Kidney (tissue), 22 donors: ENCODE measurements at regions of chr11 and their contacts with region 1.

Region 1: GRCh38 chr11:73393479-73394380 is 17.5 kb downstream of the RELT start:
- DNase-seq: peak; percentile 78 to 88 (median 83)
- H3K4me3 ChIP-seq: no peak overlapping the region
- H3K27ac ChIP-seq: no peak overlapping the region
- H3K4me1 ChIP-seq: peaks cover 0 to 2% (median 0%) of the 10 kb centered on the region in 3 donors
- H3K27me3 ChIP-seq: no peaks in the 10 kb centered on the region
- CTCF ChIP-seq: peak; percentile 82

Region 2: DNA sequence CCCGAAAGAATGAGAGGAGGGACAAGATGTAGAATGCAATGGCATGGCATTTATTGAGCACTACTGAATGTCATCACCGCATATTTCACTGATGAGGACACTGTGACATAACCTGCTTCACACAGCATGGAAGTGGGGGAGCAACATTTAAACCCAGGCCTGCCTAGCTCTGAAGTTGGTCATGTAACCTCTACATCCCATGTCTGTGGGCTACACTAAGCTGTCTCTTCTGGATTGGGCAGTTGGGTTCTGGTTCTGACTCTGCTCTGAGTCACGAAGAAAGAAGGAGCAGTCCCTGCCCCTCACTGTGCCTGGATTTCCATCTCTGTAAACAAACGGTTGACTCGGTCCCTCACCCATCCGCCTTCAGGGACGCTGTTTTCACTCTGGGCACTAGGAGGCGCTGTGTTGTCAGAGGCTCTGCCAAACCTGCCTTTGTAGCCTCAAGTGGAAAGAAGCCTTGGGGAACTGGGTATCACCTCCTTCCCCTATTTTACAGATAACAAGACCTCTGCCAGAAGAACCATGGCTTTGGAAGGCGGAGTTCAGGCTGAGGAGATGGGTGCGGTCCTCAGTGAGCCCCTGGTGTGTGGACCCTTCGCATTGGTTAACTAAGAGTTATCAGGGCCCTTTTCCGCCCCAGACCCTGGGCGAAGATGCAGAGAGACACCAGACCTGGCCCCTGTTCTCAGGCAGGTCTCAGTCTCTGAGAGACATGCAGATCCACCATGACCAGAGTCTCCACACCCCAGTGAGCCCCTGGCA is 98.3 kb before region 1 on chr11:
- intact Hi-C with region 1: loop called (anchors 10 kb)
- DNase-seq: peak; percentile 73 to 85 (median 76)
- H3K4me3 ChIP-seq: no peak overlapping the region
- H3K27ac ChIP-seq: no peak overlapping the region
- H3K4me1 ChIP-seq: no peaks in the 10 kb centered on the region
- H3K27me3 ChIP-seq: no peaks in the 10 kb centered on the region
- CTCF ChIP-seq: peak; percentile 84

Region 3: GRCh38 chr11:73307323-73308002 is 86.3 kb before region 1 on chr11:
- intact Hi-C with region 1: no loop called
- DNase-seq: peak; percentile 99 to 100 (median 99)
- H3K4me3 ChIP-seq: peak overlapping the region; percentile 67 to 79 (median 67)
- H3K27ac ChIP-seq: peak overlapping the region; percentile 97
- H3K4me1 ChIP-seq: peaks cover 2 to 26% (median 17%) of the 10 kb centered on the region in 3 donors
- H3K27me3 ChIP-seq: no peaks in the 10 kb centered on the region
- CTCF ChIP-seq: peak; percentile 90

Region 4: DNA sequence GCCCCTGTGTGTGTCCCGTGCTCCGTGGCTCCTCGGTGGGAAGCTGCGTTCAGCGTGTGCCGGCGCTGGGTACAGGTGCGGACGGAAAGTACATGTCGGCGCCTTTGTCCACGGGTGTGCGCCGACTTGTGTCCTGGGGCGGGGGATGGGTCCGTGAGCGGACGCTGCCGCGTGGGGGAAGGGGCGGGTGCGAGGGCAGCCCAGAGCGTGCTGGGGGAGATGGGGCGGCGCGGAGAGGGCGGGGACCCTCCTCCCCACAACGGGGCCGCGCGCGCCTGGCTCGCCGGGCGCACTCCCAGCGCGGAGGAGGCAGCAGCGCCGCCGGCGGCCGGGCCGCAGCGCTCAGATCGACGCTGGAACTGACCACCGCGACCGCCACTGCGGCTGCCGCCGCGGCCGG is 51.1 kb before region 1 on chr11:
- intact Hi-C with region 1: loop called (anchors 10 kb)
- DNase-seq: peak in 3 of 5 donors; percentile 36 to 70 (median 69)
- H3K4me3 ChIP-seq: peak overlapping the region; percentile 23 to 52 (median 41)
- H3K27ac ChIP-seq: no peak overlapping the region
- H3K4me1 ChIP-seq: peaks cover 0 to 53% (median 29%) of the 10 kb centered on the region in 3 donors
- H3K27me3 ChIP-seq: no peaks in the 10 kb centered on the region
- CTCF ChIP-seq: no peak

Region 5: DNA sequence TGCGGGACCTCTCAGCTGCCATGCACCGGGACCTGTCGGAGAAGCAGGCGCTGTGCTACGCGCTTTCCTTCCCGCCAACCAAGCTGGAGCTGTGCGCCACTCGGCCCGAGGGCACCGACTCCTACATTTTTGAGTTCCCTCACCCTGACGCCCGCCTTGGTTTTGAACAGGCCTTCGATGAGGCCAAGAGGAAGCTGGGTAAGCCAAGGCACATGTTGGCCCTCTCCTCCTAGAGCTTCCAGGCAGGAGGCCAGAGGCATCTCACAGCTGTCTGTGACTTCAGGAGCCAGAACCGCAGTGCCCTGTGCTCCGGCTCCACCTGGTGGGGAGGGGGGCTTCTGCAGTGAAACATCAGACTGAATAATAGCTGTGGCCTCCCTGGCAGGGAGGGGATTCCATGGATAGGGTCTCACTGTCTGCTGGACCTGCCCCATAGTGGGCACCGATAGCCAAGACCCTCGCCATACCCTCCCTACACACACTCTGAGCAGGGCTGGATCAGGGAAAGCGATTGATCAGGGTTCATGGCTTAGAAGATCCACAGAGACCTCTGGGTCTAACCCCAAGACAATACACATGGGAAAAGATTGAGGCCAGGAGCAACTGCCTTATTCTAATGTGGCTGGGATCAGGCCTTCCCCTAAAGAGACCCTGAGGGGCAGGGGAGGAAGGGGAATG is 33.3 kb before region 1 on chr11:
- intact Hi-C with region 1: no loop called
- DNase-seq: no peak
- H3K4me3 ChIP-seq: no peak overlapping the region
- H3K27ac ChIP-seq: no peak overlapping the region
- H3K4me1 ChIP-seq: no peaks in the 10 kb centered on the region
- H3K27me3 ChIP-seq: no peaks in the 10 kb centered on the region
- CTCF ChIP-seq: no peak